B cell (primary cell): ENCODE measurements at regions of chr18 and their contacts with region 1.

Region 1: GRCh38 chr18:6207116-6207515 is 207.6 kb downstream of the L3MBTL4 start:
- DNase-seq: no peak
- ATAC-seq: no peak
- H3K4me3 ChIP-seq: no peak overlapping the region
- H3K4me3 Mint-ChIP-seq: no peak overlapping the region
- H3K27ac ChIP-seq: no peak overlapping the region
- H3K27ac Mint-ChIP-seq: no peak overlapping the region
- H3K4me1 ChIP-seq: no peaks in the 10 kb centered on the region
- H3K4me1 Mint-ChIP-seq: no peaks in the 10 kb centered on the region
- H3K27me3 ChIP-seq: no peaks in the 10 kb centered on the region
- H3K27me3 Mint-ChIP-seq: no peaks in the 10 kb centered on the region
- CTCF ChIP-seq: no peak

Region 2: DNA sequence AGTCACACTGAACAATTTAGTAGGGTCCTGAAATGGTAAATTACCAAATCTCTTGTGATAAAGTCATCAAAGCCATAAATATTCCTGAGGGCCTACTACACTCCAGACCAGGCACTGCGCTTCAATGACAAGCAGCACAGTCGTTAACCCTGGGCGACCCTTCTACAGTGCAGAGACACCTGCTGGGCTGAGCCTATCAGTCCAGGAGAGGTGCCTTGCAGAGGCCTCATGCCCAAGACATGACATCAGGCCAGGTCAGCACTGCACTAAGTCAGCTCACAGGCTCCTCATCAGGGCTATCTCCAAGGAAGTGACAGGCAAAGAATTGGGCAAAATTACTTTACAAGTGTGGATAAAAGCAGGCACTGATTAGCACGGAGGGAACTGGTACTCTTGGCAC is 496.9 kb before region 1 on chr18:
- CTCF ChIA-PET with region 1: no interaction called
- POLR2A ChIA-PET with region 1: no interaction called
- intact Hi-C with region 1: no loop called
- DNase-seq: no peak
- ATAC-seq: no peak
- H3K4me3 ChIP-seq: no peak overlapping the region
- H3K4me3 Mint-ChIP-seq: no peak overlapping the region
- H3K27ac ChIP-seq: no peak overlapping the region
- H3K27ac Mint-ChIP-seq: no peak overlapping the region
- H3K4me1 ChIP-seq: no peaks in the 10 kb centered on the region
- H3K4me1 Mint-ChIP-seq: no peaks in the 10 kb centered on the region
- H3K27me3 ChIP-seq: no peaks in the 10 kb centered on the region
- H3K27me3 Mint-ChIP-seq: peaks cover 3% of the 10 kb centered on the region
- CTCF ChIP-seq: no peak

Region 3: GRCh38 chr18:6221602-6222014 is 14.5 kb after region 1 on chr18:
- CTCF ChIA-PET with region 1: no interaction called
- POLR2A ChIA-PET with region 1: no interaction called
- intact Hi-C with region 1: loop called (anchors 2 kb)
- DNase-seq: no peak
- ATAC-seq: no peak
- H3K4me3 ChIP-seq: no peak overlapping the region
- H3K4me3 Mint-ChIP-seq: no peak overlapping the region
- H3K27ac ChIP-seq: no peak overlapping the region
- H3K27ac Mint-ChIP-seq: no peak overlapping the region
- H3K4me1 ChIP-seq: no peaks in the 10 kb centered on the region
- H3K4me1 Mint-ChIP-seq: no peaks in the 10 kb centered on the region
- H3K27me3 ChIP-seq: no peaks in the 10 kb centered on the region
- H3K27me3 Mint-ChIP-seq: no peaks in the 10 kb centered on the region
- CTCF ChIP-seq: no peak